Dendritic cell treated with granulocyte-macrophage colony-stimulating factor and Interleukin-4, amounts not matched to agents 40 ng/mL and 50 ng/mL, for 4 days (primary cell): ENCODE measurements at regions of chrX and their contacts with region 1.

Region 1: DNA sequence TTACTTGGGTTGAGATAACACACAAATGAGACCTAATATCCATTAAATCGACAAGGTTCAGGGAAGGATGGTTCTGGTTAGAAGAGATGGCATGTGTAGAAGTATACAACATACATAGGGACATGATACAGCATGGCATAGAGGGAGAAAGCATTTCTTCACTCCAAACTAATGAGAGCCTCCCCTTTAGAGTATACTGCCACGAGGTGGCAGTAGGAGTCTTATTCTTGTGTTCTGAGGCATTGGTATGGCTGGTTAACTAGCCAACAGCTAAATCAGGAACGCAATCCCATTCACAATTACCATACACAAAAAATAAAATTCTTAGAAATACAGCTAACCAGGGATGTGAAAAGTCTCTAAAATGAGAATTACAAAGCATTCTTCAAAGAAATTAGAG is 29.1 kb upstream of the TRO start:
- H3K4me3 Mint-ChIP-seq: no peak overlapping the region
- H3K27ac Mint-ChIP-seq: no peak overlapping the region
- H3K4me1 Mint-ChIP-seq: no peaks in the 10 kb centered on the region
- H3K27me3 Mint-ChIP-seq: peaks cover 3% of the 10 kb centered on the region

Region 2: DNA sequence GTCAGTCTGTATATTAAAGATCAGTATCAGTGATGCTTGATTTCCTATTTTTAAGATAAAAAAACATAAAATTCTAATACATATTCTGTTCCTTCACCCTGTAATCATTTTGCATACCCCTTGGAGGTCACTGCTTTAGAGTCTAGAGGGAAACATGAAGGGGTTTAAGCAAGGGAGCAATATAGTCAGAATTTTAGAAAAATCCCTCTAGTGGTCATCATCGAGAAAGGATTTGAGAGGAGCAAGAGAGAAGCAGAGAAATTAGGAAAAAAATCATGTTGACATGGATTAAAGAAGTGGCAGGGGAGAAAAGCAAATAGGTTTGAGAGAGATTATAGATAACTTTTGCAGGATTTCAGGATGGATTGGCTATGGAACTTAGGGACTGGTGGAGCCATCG is 119.7 kb after region 1 on chrX:
- intact Hi-C with region 1: loop called (anchors 5 kb)
- H3K4me3 Mint-ChIP-seq: no peak overlapping the region
- H3K27ac Mint-ChIP-seq: no peak overlapping the region
- H3K4me1 Mint-ChIP-seq: peaks cover 28% of the 10 kb centered on the region
- H3K27me3 Mint-ChIP-seq: no peaks in the 10 kb centered on the region

Region 3: DNA sequence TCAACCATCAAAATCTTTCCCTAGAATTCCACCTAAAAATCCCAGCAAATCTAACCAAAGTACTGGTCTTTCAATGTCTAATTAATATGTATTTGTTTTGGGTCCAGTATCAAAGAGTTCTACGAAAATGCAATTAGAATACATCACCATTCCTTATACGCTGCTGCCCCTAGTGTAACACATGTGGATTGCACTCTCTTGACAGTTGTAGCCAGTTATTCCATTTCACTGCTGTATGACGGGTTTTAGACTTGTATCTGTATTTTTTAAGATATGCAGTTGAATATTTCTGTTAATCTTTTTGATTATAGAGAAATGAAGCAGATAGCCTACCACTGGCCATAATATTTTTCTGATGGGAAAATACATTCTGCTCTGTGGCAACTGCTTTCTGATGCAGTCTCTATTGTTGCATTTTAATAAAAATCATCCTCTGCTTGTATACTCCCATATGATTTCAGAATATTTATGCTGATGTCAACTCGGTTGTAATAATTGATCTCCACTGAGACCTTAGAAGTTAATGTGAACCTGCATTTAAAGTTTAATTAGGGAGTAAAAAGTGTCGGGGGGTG is 166.2 kb after region 1 on chrX:
- intact Hi-C with region 1: loop called (anchors 1 kb)
- H3K4me3 Mint-ChIP-seq: no peak overlapping the region
- H3K27ac Mint-ChIP-seq: no peak overlapping the region
- H3K4me1 Mint-ChIP-seq: peaks cover 5% of the 10 kb centered on the region
- H3K27me3 Mint-ChIP-seq: peaks cover 8% of the 10 kb centered on the region